HepG2 (cell line): ENCODE measurements at regions of chr14 and their contacts with region 1.

Region 1: GRCh38 chr14:37230551-37231194 is 32.9 kb downstream of the MIPOL1 start:
- DNase-seq: peak; percentile 90
- ATAC-seq: peak; percentile 83
- H3K4me3 ChIP-seq: no peak overlapping the region
- H3K27ac ChIP-seq: no peak overlapping the region
- H3K4me1 ChIP-seq: peaks cover 8% of the 10 kb centered on the region
- H3K27me3 ChIP-seq: no peaks in the 10 kb centered on the region
- CTCF ChIP-seq: peak; percentile 83
- EP300 ChIP-seq: no peak
- POLR2A ChIP-seq: no peak
- RAD21 ChIP-seq: peak; percentile 66

Region 2: GRCh38 chr14:37023875-37024565 is 206.7 kb before region 1 on chr14:
- CTCF ChIA-PET with region 1: no interaction called
- POLR2A ChIA-PET with region 1: no interaction called
- in situ Hi-C with region 1: no loop called
- intact Hi-C with region 1: loop called (anchors 10 kb)
- DNase-seq: peak; percentile 35
- ATAC-seq: peak; percentile 85
- H3K4me3 ChIP-seq: no peak overlapping the region
- H3K27ac ChIP-seq: no peak overlapping the region
- H3K4me1 ChIP-seq: no peaks in the 10 kb centered on the region
- H3K27me3 ChIP-seq: no peaks in the 10 kb centered on the region
- CTCF ChIP-seq: peak; percentile 45
- EP300 ChIP-seq: no peak
- POLR2A ChIP-seq: no peak
- RAD21 ChIP-seq: no peak

Region 3: GRCh38 chr14:37179896-37180502 is 50.7 kb before region 1 on chr14:
- CTCF ChIA-PET with region 1: no interaction called
- POLR2A ChIA-PET with region 1: no interaction called
- in situ Hi-C with region 1: no loop called
- intact Hi-C with region 1: loop called (anchors 5 kb)
- DNase-seq: no peak
- ATAC-seq: peak; percentile 90
- H3K4me3 ChIP-seq: no peak overlapping the region
- H3K27ac ChIP-seq: no peak overlapping the region
- H3K4me1 ChIP-seq: peaks cover 22% of the 10 kb centered on the region
- H3K27me3 ChIP-seq: peaks cover 0 to 2% of the 10 kb centered on the region in 2 experiments; a peak in 1 of 5 replicates
- CTCF ChIP-seq: no peak
- EP300 ChIP-seq: no peak
- POLR2A ChIP-seq: no peak
- RAD21 ChIP-seq: no peak

Region 4: DNA sequence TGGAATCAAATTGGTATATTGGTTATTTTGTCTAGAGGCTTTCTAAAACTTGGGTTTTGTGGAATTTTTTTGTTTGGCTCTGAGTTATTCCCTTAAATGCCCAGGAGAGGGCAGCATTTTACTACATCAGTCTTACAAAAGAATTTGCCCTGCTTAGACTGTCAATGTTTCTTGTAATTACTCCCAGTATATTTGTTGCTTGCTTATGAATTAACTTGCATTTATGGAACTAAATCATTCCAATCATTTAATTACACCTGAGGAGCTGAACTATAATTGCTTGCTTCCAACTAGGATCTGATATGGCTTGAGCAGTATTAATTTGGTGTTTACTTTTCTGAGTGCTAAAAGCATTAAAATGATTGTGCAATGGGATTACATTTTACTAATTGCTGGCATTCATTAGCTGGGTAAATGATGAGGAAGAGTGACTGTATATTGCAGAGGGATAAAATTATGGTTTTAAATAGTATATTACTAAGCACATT is 15.8 kb after region 1 on chr14:
- CTCF ChIA-PET with region 1: interaction called, 11 read pairs
- POLR2A ChIA-PET with region 1: no interaction called
- in situ Hi-C with region 1: no loop called
- intact Hi-C with region 1: no loop called
- DNase-seq: peak; percentile 86
- ATAC-seq: peak; percentile 79
- H3K4me3 ChIP-seq: no peak overlapping the region
- H3K27ac ChIP-seq: no peak overlapping the region
- H3K4me1 ChIP-seq: peaks cover 33% of the 10 kb centered on the region
- H3K27me3 ChIP-seq: no peaks in the 10 kb centered on the region
- CTCF ChIP-seq: peak; percentile 88
- EP300 ChIP-seq: peak in 1 of 2 experiments; percentile 37; a peak in 1 of 4 replicates
- POLR2A ChIP-seq: no peak
- RAD21 ChIP-seq: peak; percentile 93

Region 5: DNA sequence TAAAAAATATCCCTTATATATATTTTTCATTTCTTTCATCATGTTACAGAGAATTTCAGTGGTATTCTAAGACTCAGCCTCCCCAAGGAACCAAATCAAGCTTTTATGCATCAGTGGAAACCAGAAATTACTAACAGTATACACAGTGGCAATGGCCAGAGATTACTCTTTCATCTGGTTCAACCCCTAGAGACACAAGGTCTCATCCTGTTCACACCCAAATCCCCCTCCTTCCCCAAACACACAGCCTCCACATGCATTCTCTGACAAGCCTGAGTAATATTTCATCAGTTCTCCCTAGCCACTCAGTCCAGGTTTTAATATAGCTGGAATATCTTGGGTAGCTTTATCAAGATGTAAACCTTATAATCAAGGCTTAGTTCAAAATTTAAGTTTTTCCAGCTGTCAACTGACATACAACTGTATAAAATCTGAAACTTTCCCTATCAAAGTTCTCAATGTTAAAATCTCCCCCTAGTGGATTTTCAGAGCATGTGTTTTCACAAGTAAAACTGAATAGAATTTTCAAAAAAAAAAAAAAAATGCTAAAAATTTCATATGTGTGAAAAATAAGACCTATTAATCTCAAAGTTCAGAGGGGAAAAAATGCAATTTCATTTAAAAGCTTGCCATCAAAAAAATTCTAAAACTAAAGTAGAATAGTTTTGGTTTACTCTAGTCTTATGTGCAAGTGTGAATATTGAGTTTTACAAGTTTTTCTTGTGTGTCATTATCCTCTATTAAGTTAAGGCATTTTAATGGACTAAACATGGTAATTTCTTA is 966.5 kb after region 1 on chr14:
- CTCF ChIA-PET with region 1: no interaction called
- POLR2A ChIA-PET with region 1: no interaction called
- in situ Hi-C with region 1: no loop called
- intact Hi-C with region 1: loop called (anchors 2 kb)
- DNase-seq: no peak
- ATAC-seq: peak; percentile 57; the same call in 2 of the 3 replicates
- H3K4me3 ChIP-seq: no peak overlapping the region
- H3K27ac ChIP-seq: no peak overlapping the region
- H3K4me1 ChIP-seq: no peaks in the 10 kb centered on the region
- H3K27me3 ChIP-seq: no peaks in the 10 kb centered on the region; a peak in 1 of 5 replicates
- CTCF ChIP-seq: peak; percentile 29; the same call in 1 of the 2 replicates
- EP300 ChIP-seq: no peak
- POLR2A ChIP-seq: no peak
- RAD21 ChIP-seq: no peak